B cell (primary cell): ENCODE measurements at regions of chr12 and their contacts with region 1.

Region 1: DNA sequence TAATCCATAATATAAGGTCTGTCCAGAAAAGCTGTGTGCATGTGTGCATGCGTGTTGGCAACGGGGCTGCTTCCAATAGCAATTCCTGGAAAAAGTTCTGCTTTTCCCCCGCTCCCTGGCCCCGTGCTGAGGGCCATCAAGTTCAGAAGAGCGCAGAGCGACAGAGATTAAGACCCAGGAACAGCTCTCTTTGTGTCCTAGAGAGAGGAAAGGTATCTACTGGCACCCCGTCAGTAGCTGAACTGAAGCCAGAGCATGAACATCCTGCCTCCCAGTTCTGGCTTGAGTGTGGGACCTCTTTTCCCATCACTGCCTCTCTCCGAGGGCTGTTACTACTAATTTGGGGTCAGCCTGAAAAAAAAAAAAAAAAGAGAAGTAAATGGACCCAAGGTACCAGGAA is 15.5 kb downstream of the HDAC7 start:
- DNase-seq: no peak
- ATAC-seq: no peak
- H3K4me3 ChIP-seq: no peak overlapping the region
- H3K4me3 Mint-ChIP-seq: peak overlapping the region; percentile 70
- H3K27ac ChIP-seq: peak overlapping the region in 1 of 2 donors; percentile 94
- H3K27ac Mint-ChIP-seq: peak overlapping the region; percentile 91
- H3K4me1 ChIP-seq: peaks cover 57 to 85% of the 10 kb centered on the region in 2 donors
- H3K4me1 Mint-ChIP-seq: peaks cover 85% of the 10 kb centered on the region
- H3K27me3 ChIP-seq: no peaks in the 10 kb centered on the region
- H3K27me3 Mint-ChIP-seq: no peaks in the 10 kb centered on the region
- CTCF ChIP-seq: no peak

Region 2: DNA sequence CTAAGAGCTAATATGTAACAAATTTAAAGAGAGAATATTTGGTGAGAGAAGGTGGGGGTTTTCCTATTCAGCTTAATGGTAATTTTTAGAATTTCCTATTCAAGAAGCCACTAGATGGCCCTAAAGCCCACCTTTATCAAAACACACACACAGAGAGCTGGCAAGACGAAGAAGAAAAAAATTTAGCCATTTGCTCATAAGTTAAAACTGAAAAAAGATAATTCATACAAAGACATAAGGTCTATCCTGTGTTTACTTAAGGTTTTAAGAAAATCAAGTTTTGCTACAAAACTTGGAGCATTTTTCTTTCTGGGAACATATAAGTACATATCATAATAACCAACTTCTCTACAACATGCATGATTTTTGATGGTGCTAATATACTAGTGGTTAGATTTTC is 771.5 kb before region 1 on chr12:
- CTCF ChIA-PET with region 1: no interaction called
- POLR2A ChIA-PET with region 1: no interaction called
- intact Hi-C with region 1: no loop called
- DNase-seq: peak; percentile 78
- ATAC-seq: peak; percentile 81
- H3K4me3 ChIP-seq: no peak overlapping the region
- H3K4me3 Mint-ChIP-seq: no peak overlapping the region
- H3K27ac ChIP-seq: no peak overlapping the region
- H3K27ac Mint-ChIP-seq: no peak overlapping the region
- H3K4me1 ChIP-seq: peaks cover 0 to 3% of the 10 kb centered on the region in 2 donors
- H3K4me1 Mint-ChIP-seq: peaks cover 8% of the 10 kb centered on the region
- H3K27me3 ChIP-seq: no peaks in the 10 kb centered on the region
- H3K27me3 Mint-ChIP-seq: no peaks in the 10 kb centered on the region
- CTCF ChIP-seq: peak; percentile 77

Region 3: DNA sequence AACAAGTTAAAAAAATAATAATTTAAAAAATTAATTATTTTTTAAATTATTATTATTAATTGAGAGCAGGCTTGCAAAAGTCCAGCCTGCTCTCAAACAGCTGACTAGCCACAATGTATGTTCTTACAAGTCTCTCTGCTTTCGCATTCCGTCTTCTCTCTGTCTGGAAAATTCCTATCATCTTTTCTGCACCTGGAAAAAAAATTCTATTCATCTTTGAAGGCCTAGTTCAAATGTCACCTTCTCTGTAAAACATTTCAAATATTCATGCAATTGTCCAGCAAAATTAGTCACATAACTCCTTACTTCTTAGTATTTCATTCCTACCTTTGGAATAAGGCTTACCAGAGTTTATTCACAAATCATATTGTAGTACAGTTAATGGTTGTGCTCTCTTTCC is 173.9 kb before region 1 on chr12:
- CTCF ChIA-PET with region 1: no interaction called
- POLR2A ChIA-PET with region 1: no interaction called
- intact Hi-C with region 1: no loop called
- DNase-seq: no peak
- ATAC-seq: no peak
- H3K4me3 ChIP-seq: no peak overlapping the region
- H3K4me3 Mint-ChIP-seq: no peak overlapping the region
- H3K27ac ChIP-seq: no peak overlapping the region
- H3K27ac Mint-ChIP-seq: no peak overlapping the region
- H3K4me1 ChIP-seq: no peaks in the 10 kb centered on the region
- H3K4me1 Mint-ChIP-seq: peaks cover 10% of the 10 kb centered on the region
- H3K27me3 ChIP-seq: no peaks in the 10 kb centered on the region
- H3K27me3 Mint-ChIP-seq: no peaks in the 10 kb centered on the region
- CTCF ChIP-seq: no peak

Region 4: GRCh38 chr12:47819896-47820630 is 15.9 kb after region 1 on chr12 and contains the start of gene HDAC7:
- CTCF ChIA-PET with region 1: interaction called, 76 read pairs
- POLR2A ChIA-PET with region 1: interaction called, 10 read pairs
- intact Hi-C with region 1: loop called (anchors 1 kb)
- DNase-seq: peak; percentile 82
- ATAC-seq: peak; percentile 74
- H3K4me3 ChIP-seq: peak within 1 kb of the TSS; percentile 58 to 76 (median 73)
- H3K4me3 Mint-ChIP-seq: peak within 1 kb of the TSS; percentile 96
- H3K27ac ChIP-seq: peak within 1 kb of the TSS; percentile 67 to 96
- H3K27ac Mint-ChIP-seq: peak within 1 kb of the TSS; percentile 97
- H3K4me1 ChIP-seq: peaks cover 51 to 64% of the 10 kb centered on the region in 2 donors
- H3K4me1 Mint-ChIP-seq: peaks cover 67% of the 10 kb centered on the region
- H3K27me3 ChIP-seq: no peaks in the 10 kb centered on the region
- H3K27me3 Mint-ChIP-seq: no peaks in the 10 kb centered on the region
- CTCF ChIP-seq: no peak
- total RNA-seq, gene HDAC7: 175 and 178 TPM in 2 replicates